Tibial artery (tissue), 4 donors: ENCODE measurements at regions of chr12 and their contacts with region 1.

Region 1: DNA sequence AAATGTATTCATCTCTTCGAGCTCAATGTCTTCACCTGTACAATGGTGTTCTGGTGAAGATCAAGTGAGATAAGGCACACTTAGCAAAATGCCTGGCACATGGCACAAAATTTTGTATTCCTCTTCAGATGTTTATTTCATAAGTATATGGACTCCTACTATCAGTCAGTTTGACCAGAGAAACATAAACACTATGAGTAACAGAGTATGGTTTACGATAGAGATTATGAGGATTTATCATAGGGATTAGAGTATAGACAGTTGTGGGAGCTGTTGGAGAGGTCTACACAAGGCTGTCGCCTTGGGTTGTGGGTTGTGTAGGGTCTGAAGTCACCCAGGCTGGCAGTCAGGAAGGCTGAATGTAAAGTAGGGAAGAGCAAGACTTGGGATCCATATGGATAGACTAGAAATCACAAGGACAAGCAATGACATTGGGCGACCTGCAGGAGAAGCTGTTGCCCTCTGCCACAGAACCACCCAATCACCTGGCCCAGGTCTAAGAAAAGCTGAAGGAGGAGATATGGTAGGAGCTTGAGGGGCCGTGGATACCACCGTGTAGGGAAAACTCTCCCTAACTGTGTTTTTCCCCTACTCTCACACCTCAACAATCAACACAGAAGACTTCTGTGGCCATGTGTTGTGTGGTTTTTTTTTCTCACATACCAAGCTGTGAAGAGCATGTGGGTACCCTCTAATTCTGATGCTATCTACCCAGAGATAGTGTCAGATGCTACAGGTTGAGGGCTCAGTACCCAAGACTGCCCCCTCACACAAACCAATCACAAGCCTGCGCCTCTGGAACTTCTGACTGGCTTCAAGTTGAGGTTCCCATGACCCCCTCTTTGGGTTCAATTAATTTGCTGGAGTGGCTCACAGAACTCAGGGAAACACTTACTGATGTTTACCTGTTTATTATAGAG is 27.2 kb upstream of the RESF1 start:
- DNase-seq: no peak
- H3K4me3 ChIP-seq: no peak overlapping the region
- H3K27ac ChIP-seq: no peak overlapping the region
- H3K4me1 ChIP-seq: no peaks in the 10 kb centered on the region
- H3K27me3 ChIP-seq: no peaks in the 10 kb centered on the region
- CTCF ChIP-seq: no peak

Region 2: DNA sequence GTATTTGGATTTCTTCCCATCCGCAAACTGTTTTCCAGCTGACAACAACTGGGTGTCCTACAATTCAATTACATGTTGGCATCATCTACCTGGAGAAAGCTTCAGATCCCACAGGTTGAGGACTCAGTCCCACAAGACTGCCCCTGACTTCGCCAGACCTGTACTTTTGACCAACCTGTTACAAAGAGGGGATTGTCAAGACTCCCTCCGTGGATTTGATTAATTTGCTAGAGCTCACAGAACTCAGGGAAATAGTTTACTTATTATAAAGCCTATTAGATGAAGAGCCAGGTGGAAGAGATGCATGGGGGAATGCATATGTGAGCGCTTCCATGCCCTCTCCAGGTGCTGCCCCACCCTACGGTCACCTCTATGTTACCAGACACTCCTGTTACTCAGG is 41.8 kb after region 1 on chr12:
- intact Hi-C with region 1: loop called (anchors 1 kb)
- DNase-seq: no peak
- H3K4me3 ChIP-seq: no peak overlapping the region
- H3K27ac ChIP-seq: no peak overlapping the region
- H3K4me1 ChIP-seq: no peaks in the 10 kb centered on the region
- H3K27me3 ChIP-seq: no peaks in the 10 kb centered on the region
- CTCF ChIP-seq: no peak

Region 3: DNA sequence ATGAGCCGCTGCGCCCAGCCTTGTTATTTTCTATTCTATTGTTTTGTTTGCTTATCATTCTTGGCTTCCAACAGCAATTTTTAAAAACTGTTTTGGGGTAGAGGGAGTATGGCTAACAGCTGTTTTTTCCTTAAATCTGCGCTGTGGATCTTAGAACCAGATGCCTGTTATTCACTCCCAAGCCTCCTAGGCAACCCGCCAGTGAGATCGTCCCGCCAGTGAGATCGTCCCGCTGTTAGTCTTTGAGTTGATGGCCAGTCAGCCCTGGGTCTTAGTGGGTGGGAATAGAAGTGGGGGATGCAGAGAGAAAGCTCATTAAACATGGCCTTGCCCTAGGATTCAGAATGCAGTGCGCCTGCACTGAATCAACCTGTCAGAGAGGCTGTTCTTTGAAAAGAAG is 107.3 kb after region 1 on chr12:
- intact Hi-C with region 1: no loop called
- DNase-seq: no peak
- H3K4me3 ChIP-seq: no peak overlapping the region
- H3K27ac ChIP-seq: no peak overlapping the region
- H3K4me1 ChIP-seq: no peaks in the 10 kb centered on the region
- H3K27me3 ChIP-seq: no peaks in the 10 kb centered on the region
- CTCF ChIP-seq: no peak